ENCODE measurements at regions of chr9 and their contacts with region 1.

Region 1: DNA sequence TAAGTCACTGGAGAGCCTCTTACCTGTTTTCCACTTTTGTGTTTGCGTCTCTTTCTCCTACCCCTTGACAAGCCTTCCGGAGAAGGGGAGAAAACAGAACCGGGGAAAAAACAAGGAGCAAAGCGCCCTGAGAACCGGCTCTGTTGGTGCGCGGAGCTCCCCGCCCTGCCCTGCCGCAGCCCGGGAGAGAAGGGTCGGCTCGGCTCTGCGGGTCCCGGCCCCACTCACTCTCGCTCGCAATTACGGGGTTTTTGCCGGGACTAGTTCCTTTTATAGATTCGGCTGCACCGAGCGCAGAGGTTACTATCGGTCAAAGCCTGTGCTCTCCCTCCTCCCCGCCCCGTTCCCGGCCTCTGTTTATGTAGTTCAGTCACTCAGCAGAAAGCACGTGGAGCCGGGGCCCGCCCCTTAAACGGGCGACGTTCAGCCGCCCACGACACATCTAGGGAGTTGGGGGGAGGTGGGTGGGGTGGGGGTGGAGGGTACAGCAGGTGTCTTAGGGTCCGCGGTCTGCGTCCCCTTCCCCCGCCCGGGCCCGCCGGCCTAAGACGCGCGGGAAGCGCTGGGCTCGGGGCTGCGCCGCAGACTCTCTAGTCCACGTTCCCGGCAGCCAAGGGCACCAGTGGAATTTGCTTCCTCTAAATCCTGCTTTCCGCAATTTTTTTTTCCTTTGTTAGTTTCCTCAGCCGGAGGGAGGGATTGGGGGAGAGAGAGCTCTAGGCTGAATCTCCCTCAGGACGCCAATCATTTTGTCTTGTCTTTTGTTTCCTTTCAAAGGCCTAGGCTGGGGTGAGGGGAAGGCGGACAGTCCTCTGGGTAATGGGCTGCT is at the start of gene ABCA1:
- DNase-seq: peak; percentile 96
- ATAC-seq: peak; percentile 87
- total RNA-seq, gene ABCA1: 12.6 TPM

Region 2: DNA sequence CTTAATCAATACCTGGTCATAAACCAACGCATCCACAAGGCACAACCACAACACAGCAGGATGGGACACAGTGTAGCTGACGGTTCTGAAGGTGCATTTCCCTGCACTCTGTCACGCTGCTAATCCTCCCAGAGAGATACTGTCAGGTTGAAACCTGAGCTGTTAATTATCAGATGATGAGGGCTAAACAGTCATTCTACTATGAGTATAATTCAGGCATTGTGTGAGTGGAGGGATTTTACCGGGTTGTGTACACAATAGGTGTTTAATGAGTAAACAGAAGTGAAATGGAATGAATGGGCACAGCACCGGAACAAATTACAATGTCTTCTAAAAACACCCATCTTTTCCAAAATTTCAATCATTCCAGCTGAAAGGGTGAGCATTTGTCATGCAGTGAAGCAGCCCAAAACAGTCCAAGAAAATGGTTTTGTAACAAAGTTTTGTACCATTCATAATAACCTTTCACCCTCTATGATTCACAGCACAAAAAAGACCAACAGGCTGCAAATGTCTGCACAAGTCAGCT is 71.6 kb before region 1 on chr9:
- intact Hi-C with region 1: no loop called
- DNase-seq: no peak
- ATAC-seq: no peak

Region 3: GRCh38 chr9:104868687-104869404 is 59.3 kb before region 1 on chr9:
- intact Hi-C with region 1: loop called (anchors 5 kb)
- DNase-seq: peak; percentile 78
- ATAC-seq: peak; percentile 90

Region 4: DNA sequence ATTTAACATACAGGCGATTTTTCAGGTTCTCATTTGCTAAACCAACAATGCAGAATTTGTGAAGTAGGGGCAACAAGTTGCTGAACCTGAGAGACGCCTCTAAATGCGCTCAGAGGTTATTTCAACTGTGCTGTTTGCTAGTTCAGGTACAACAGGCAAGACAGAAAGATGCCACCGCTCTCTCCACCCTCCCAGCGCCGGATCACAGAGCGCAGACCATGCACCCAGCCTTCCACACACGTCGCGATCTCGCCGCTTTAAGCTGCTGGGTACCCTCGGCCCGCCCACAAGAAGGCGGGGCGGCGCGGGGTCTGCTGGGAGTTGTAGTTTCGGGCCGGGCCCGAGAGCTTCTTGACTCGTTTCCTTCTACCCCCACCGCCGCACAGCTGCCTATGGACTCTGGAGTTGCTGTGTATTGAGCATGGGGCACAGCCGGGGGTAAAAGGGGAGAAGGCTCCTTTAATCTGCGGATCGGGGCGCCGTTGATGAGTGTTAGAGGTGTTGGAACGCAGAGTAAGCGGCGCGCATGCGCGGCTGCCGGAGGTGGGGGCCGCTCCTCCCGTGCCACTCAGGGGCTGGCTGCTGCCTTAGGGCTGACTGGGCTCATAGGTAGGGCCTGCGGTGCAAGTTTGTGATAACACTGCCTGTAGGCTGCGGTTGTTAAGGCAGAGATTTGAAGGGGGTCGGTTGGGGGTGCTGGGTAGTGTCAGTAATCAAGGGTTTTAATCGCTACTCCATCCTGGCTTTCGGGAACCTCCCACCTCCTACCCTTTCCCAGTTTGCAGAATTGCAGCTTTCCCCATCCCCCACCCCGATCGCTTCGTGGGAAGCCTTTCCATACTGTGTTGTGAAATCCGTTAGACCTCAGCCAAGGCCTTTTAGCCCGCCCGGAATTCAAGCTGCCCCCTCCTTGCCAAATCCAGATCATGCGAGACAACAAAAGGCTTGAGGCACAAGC is 40.2 kb after region 1 on chr9:
- intact Hi-C with region 1: loop called (anchors 1 kb)
- DNase-seq: peak; percentile 96
- ATAC-seq: peak; percentile 94

Region 5: DNA sequence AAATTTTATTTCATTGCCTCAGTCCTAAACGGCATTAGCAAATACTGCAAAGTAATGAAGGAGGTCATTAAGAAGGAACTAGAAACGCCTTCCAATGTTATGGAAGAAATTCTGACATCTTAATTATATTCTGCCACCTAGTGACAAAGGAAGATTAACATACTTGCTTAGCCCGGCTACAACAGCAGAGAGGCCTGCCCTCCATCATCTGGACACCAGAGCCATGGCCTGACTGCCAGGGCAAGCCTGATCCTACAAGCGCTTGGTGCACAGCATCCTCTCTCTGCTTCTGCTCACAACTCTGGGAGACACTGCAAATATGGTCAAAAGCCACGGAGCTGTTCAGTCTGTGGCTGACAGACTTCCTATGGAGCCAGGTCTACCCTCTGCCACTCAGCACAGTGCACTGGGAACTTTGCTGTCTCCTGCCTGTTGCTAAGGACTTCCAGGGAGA is 229.0 kb after region 1 on chr9:
- intact Hi-C with region 1: loop called (anchors 1 kb)
- DNase-seq: no peak
- ATAC-seq: peak; percentile 88

Region 6: DNA sequence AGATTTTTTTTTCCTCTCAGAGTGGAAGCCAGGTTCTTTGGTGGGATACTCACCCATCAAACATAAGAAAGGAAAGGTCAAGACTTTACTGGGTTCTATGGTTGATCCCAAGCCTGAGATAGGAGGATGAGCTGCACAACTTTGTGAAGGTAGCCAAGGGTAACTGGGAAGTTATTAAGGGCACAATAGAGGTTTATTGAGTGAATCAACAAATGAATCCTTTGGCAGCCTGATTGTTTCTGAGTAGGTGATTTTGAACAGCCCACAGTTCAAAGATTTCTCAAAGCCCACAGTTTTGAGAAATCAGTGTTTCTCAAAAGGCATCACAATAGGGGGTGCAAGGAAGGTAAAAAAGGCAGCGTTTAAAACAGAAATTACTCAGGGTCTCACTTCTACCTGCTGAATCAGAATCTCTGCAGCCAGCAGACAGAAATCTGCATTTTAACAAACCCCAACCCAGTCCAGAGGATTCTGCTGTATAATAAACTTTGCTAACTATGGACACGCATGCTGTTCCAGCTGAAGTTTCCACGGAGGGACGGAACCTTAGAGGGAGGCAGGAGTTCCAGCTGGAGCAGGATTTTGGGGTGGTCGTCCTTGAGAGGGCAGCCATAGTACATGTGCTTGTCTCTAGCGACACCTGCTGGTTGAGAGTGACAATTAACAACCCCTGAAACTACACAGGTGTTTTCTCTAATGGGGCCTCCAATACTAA is 487.0 kb after region 1 on chr9:
- intact Hi-C with region 1: loop called (anchors 1 kb)
- DNase-seq: no peak
- ATAC-seq: no peak